MCF 10A (cell line): ENCODE measurements at regions of chr12 and their contacts with region 1.

Region 1: DNA sequence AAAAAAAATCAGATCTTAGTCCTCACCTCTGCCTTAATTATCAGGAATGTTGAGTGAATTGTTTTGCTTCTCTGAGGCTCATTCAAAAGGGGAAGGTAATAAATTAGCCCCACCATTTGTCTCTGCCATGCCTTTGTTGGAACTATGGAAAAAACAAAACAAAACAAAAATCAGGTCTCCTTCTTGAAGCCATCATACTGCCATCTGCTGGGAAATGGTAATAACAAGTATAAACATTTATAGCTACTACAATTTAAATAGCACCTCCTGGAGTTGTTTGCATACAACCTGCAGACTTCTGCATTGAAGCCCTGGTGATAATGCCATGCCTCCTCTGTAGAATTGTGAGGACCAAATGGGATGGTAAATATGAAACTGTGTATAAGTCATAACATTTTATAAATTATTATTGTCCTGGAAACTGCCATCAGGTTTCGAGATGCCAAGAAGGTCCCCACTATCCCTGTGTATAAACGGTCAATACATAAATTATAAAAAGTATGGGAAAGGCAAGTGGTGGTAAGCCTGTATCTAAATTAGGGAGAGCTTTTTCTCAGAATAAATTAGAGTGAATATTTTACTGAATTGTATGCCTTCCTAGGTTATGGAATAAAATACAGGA is 87.2 kb upstream of the FGD4 start:
- DNase-seq: peak; percentile 68
- H3K4me3 Mint-ChIP-seq: no peak overlapping the region
- H3K27ac Mint-ChIP-seq: peak overlapping the region; percentile 68
- H3K4me1 Mint-ChIP-seq: peaks cover 7% of the 10 kb centered on the region
- H3K27me3 Mint-ChIP-seq: no peaks in the 10 kb centered on the region
- CTCF ChIP-seq: peak; percentile 58

Region 2: GRCh38 chr12:31682136-31682962 is 629.8 kb before region 1 on chr12:
- CTCF ChIA-PET with region 1: interaction called, 24 read pairs
- POLR2A ChIA-PET with region 1: no interaction called
- intact Hi-C with region 1: loop called (anchors 1 kb)
- DNase-seq: peak; percentile 88
- H3K4me3 Mint-ChIP-seq: no peak overlapping the region
- H3K27ac Mint-ChIP-seq: no peak overlapping the region
- H3K4me1 Mint-ChIP-seq: no peaks in the 10 kb centered on the region
- H3K27me3 Mint-ChIP-seq: no peaks in the 10 kb centered on the region
- CTCF ChIP-seq: peak; percentile 82

Region 3: GRCh38 chr12:32051559-32052414 is 260.4 kb before region 1 on chr12:
- CTCF ChIA-PET with region 1: interaction called, 20 read pairs
- POLR2A ChIA-PET with region 1: no interaction called
- intact Hi-C with region 1: no loop called
- DNase-seq: peak; percentile 92
- H3K4me3 Mint-ChIP-seq: no peak overlapping the region
- H3K27ac Mint-ChIP-seq: peak overlapping the region; percentile 47
- H3K4me1 Mint-ChIP-seq: peaks cover 7% of the 10 kb centered on the region
- H3K27me3 Mint-ChIP-seq: no peaks in the 10 kb centered on the region
- CTCF ChIP-seq: no peak

Region 4: GRCh38 chr12:32106517-32107358 is 205.4 kb before region 1 on chr12 and contains the start of gene BICD1:
- CTCF ChIA-PET with region 1: interaction called, 3 read pairs
- POLR2A ChIA-PET with region 1: no interaction called
- intact Hi-C with region 1: loop called (anchors 2 kb)
- DNase-seq: peak; percentile 89
- H3K4me3 Mint-ChIP-seq: peak within 1 kb of the TSS; percentile 81
- H3K27ac Mint-ChIP-seq: peak within 1 kb of the TSS; percentile 76
- H3K4me1 Mint-ChIP-seq: peaks cover 18% of the 10 kb centered on the region
- H3K27me3 Mint-ChIP-seq: no peaks in the 10 kb centered on the region
- CTCF ChIP-seq: peak; percentile 25
- total RNA-seq, gene BICD1: 39.9 and 49.3 TPM in 2 replicates

Region 5: DNA sequence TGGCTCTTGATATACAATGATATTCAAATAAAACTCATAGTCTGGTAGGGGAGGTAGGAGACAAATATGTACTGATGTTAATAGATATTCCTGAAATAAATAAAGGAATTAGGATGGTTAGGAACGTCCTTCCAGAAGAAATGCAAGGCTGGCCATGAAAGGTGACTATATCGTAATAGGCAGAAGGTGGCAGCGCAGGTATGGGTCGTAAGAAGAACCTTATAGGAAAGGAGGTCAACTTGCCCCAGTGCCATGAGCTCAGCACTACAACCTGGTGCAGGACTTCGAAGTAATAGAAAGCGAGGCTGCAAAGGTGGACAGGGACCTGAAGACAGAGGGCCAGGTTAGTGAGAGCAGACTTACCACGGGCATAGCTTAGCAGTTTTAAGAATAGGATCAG is 31.9 kb after region 1 on chr12:
- CTCF ChIA-PET with region 1: no interaction called
- POLR2A ChIA-PET with region 1: no interaction called
- intact Hi-C with region 1: no loop called
- DNase-seq: peak; percentile 4
- H3K4me3 Mint-ChIP-seq: no peak overlapping the region
- H3K27ac Mint-ChIP-seq: no peak overlapping the region
- H3K4me1 Mint-ChIP-seq: no peaks in the 10 kb centered on the region
- H3K27me3 Mint-ChIP-seq: no peaks in the 10 kb centered on the region
- CTCF ChIP-seq: no peak